Activated CD4-positive, alpha-beta memory T cell treated with anti-CD3 and anti-CD28 coated beads for 36 hours (primary cell): ENCODE measurements at regions of chr1 and their contacts with region 1.

Region 1: GRCh38 chr1:179002552-179003345 is 22.9 kb upstream of the FAM20B start:
- DNase-seq: peak; percentile 73
- H3K4me3 Mint-ChIP-seq: no peak overlapping the region
- H3K27ac Mint-ChIP-seq: no peak overlapping the region
- H3K4me1 Mint-ChIP-seq: peaks cover 17% of the 10 kb centered on the region
- H3K27me3 Mint-ChIP-seq: no peaks in the 10 kb centered on the region

Region 2: DNA sequence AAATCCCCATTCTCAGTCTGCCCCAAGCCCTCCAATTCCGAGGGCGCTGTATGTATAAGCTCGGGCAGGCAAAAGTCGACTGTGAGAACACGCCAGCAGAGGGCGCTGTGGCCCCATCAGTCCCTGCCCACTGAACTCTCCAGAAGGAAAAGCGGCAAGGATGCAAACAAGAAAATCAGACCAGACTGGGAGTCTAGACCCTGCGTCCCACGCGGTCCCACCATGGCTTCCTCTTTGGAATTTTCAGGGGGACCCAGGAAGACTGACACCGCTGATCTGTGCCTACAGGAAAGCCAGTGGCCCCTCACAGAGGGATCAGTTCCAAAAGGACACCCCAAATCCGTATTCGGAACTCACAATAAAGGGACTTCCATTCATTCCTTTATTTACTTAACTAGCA is 470.4 kb before region 1 on chr1:
- CTCF ChIA-PET with region 1: interaction called, 50 read pairs
- POLR2A ChIA-PET with region 1: no interaction called
- intact Hi-C with region 1: loop called (anchors 2 kb)
- DNase-seq: peak; percentile 83
- H3K4me3 Mint-ChIP-seq: no peak overlapping the region
- H3K27ac Mint-ChIP-seq: no peak overlapping the region
- H3K4me1 Mint-ChIP-seq: no peaks in the 10 kb centered on the region
- H3K27me3 Mint-ChIP-seq: no peaks in the 10 kb centered on the region

Region 3: DNA sequence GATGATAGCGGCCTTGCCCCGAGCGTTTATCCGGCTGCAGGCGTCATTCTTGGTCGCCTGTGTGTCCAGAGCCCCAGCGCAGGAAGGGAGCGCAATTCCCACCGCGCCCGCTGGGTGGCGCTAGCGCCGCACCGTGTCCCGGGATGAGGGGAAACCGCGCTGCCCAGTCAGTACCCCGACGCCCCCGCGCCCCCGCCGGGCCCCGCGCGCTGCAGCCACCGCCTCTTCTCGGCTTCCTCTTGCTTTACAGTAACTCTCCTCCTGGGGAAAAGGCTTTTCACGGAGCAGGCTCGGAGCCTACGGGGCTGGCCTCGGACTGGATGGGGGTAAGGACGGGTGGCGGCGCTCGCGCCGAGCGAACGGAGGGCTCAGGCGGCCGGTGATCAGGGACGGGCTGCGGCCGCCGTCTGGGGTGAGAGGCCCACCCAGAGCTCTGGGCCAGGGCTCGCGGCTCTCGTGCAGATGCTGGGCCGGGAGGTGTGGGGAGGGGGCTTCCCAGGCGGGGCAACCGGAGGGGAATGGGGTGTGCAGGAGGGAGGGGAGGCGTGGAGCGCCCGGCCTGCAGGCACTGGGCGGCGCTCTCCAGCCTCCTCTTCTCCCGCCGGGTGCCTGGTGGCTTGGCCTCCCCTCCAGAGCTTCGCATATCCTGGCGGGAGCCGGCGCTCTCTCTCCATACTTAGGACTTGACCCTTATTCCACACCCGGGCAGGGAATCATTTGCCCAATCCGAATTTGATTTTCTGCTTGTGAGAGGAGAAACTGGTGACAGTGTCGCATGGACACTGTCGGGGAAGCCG is 460.0 kb before region 1 on chr1:
- CTCF ChIA-PET with region 1: interaction called, 20 read pairs
- POLR2A ChIA-PET with region 1: no interaction called
- intact Hi-C with region 1: loop called (anchors 1 kb)
- DNase-seq: peak; percentile 94
- H3K4me3 Mint-ChIP-seq: peak overlapping the region; percentile 85
- H3K27ac Mint-ChIP-seq: peak overlapping the region; percentile 79
- H3K4me1 Mint-ChIP-seq: peaks cover 6% of the 10 kb centered on the region
- H3K27me3 Mint-ChIP-seq: no peaks in the 10 kb centered on the region

Region 4: DNA sequence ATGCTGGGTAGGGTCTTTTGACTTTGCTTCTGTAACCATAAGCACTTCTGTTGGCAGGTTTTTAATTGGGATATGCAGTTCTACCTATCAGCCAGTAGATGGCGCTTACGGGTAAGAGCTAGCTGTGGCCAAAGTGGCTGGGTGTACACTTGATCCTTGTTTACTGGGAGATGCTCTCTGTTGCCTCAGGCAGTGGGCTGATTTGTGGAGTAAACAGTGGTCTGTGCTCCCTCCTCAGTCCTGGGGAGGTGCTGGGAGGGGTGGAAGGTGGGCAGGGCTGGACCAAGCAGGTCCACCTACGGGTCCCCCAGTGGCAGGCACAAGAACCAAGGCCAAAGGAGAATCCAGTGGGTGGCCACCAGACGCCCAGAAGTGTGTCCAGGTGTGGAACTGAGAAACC is 234.3 kb before region 1 on chr1:
- CTCF ChIA-PET with region 1: interaction called, 37 read pairs
- POLR2A ChIA-PET with region 1: no interaction called
- intact Hi-C with region 1: no loop called
- DNase-seq: no peak
- H3K4me3 Mint-ChIP-seq: no peak overlapping the region
- H3K27ac Mint-ChIP-seq: no peak overlapping the region
- H3K4me1 Mint-ChIP-seq: no peaks in the 10 kb centered on the region
- H3K27me3 Mint-ChIP-seq: no peaks in the 10 kb centered on the region

Region 5: GRCh38 chr1:178774263-178774662 is 228.5 kb before region 1 on chr1:
- CTCF ChIA-PET with region 1: interaction called, 32 read pairs
- POLR2A ChIA-PET with region 1: no interaction called
- intact Hi-C with region 1: loop called (anchors 1 kb)
- DNase-seq: no peak
- H3K4me3 Mint-ChIP-seq: no peak overlapping the region
- H3K27ac Mint-ChIP-seq: no peak overlapping the region
- H3K4me1 Mint-ChIP-seq: no peaks in the 10 kb centered on the region
- H3K27me3 Mint-ChIP-seq: no peaks in the 10 kb centered on the region

Region 6: GRCh38 chr1:179014123-179014522 is 11.4 kb after region 1 on chr1:
- CTCF ChIA-PET with region 1: interaction called, 10 read pairs
- POLR2A ChIA-PET with region 1: no interaction called
- intact Hi-C with region 1: no loop called
- DNase-seq: no peak
- H3K4me3 Mint-ChIP-seq: no peak overlapping the region
- H3K27ac Mint-ChIP-seq: no peak overlapping the region
- H3K4me1 Mint-ChIP-seq: no peaks in the 10 kb centered on the region
- H3K27me3 Mint-ChIP-seq: no peaks in the 10 kb centered on the region

Region 7: GRCh38 chr1:179025125-179025974 is 22.6 kb after region 1 on chr1 and contains the start of gene FAM20B:
- CTCF ChIA-PET with region 1: interaction called, 13 read pairs
- POLR2A ChIA-PET with region 1: no interaction called
- intact Hi-C with region 1: no loop called
- DNase-seq: peak; percentile 94
- H3K4me3 Mint-ChIP-seq: peak within 1 kb of the TSS; percentile 87
- H3K27ac Mint-ChIP-seq: peak within 1 kb of the TSS; percentile 85
- H3K4me1 Mint-ChIP-seq: peaks cover 37% of the 10 kb centered on the region
- H3K27me3 Mint-ChIP-seq: no peaks in the 10 kb centered on the region
- total RNA-seq, gene FAM20B: 38.1 to 39.2 TPM

Region 8: DNA sequence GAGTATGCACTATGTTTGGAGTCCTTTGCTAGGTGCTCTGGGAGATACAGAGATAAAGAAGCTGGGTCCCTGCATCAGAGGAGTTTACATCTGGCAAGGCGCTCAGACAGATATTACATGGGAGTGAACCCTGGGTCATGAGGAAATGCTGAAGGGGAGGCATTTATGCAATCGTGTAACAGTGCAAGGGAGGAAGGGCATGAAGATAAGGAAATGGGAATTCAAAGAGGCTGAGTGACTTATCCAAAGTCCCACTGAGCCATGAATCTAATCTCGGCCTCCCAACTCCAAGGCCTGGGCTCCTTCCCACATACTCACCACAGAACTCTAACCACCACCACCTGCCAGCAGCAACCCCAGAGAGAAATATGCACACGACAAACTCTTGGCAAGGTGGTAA is 791.9 kb after region 1 on chr1:
- CTCF ChIA-PET with region 1: no interaction called
- POLR2A ChIA-PET with region 1: no interaction called
- intact Hi-C with region 1: no loop called
- DNase-seq: no peak
- H3K4me3 Mint-ChIP-seq: no peak overlapping the region
- H3K27ac Mint-ChIP-seq: no peak overlapping the region
- H3K4me1 Mint-ChIP-seq: no peaks in the 10 kb centered on the region
- H3K27me3 Mint-ChIP-seq: no peaks in the 10 kb centered on the region